Ascending aorta (tissue), 2 donors: ENCODE measurements at regions of chr13 and their contacts with region 1.

Region 1: GRCh38 chr13:111216166-111216960 is 101.3 kb downstream of the ARHGEF7 start:
- DNase-seq: peak in 1 of 2 donors; percentile 69
- H3K4me3 ChIP-seq: peak overlapping the region in 1 of 2 donors; percentile 24
- H3K27ac ChIP-seq: peak overlapping the region; percentile 77 to 82
- H3K4me1 ChIP-seq: peaks cover 12 to 69% of the 10 kb centered on the region in 2 donors
- H3K27me3 ChIP-seq: no peaks in the 10 kb centered on the region
- CTCF ChIP-seq: peak; percentile 35 to 74 (median 49)

Region 2: GRCh38 chr13:111153279-111153976 is 62.9 kb before region 1 on chr13:
- intact Hi-C with region 1: loop called (anchors 1 kb)
- DNase-seq: peak; percentile 64 to 96
- H3K4me3 ChIP-seq: peak overlapping the region; percentile 66 to 89
- H3K27ac ChIP-seq: peak overlapping the region; percentile 99
- H3K4me1 ChIP-seq: peaks cover 2 to 36% of the 10 kb centered on the region in 2 donors
- H3K27me3 ChIP-seq: no peaks in the 10 kb centered on the region
- CTCF ChIP-seq: peak in 2 of 3 experiments; percentile 7 to 33

Region 3: GRCh38 chr13:111177921-111178320 is 38.4 kb before region 1 on chr13:
- intact Hi-C with region 1: loop called (anchors 2 kb)
- DNase-seq: no peak
- H3K4me3 ChIP-seq: peak overlapping the region; percentile 23 to 31
- H3K27ac ChIP-seq: peak overlapping the region; percentile 92 to 96
- H3K4me1 ChIP-seq: peaks cover 23 to 67% of the 10 kb centered on the region in 2 donors
- H3K27me3 ChIP-seq: no peaks in the 10 kb centered on the region
- CTCF ChIP-seq: no peak